ENCODE measurements at regions of chr4 and their contacts with region 1.

Region 1: GRCh38 chr4:1870578-1871443 is at the start of gene NSD2:
- DNase-seq: peak; percentile 88
- H3K4me3 Mint-ChIP-seq: peak within 1 kb of the TSS; percentile 89
- H3K27ac Mint-ChIP-seq: peak within 1 kb of the TSS; percentile 97
- H3K4me1 Mint-ChIP-seq: peaks cover 45% of the 10 kb centered on the region
- H3K27me3 Mint-ChIP-seq: peaks cover 2% of the 10 kb centered on the region
- total RNA-seq, gene NSD2: 248 to 271 TPM

Region 2: GRCh38 chr4:1604711-1605205 is 266.1 kb before region 1 on chr4:
- CTCF ChIA-PET with region 1: no interaction called
- POLR2A ChIA-PET with region 1: no interaction called
- DNase-seq: peak; percentile 54
- H3K4me3 Mint-ChIP-seq: peak overlapping the region; percentile 56
- H3K27ac Mint-ChIP-seq: peak overlapping the region; percentile 97
- H3K4me1 Mint-ChIP-seq: peaks cover 19% of the 10 kb centered on the region
- H3K27me3 Mint-ChIP-seq: no peaks in the 10 kb centered on the region

Region 3: DNA sequence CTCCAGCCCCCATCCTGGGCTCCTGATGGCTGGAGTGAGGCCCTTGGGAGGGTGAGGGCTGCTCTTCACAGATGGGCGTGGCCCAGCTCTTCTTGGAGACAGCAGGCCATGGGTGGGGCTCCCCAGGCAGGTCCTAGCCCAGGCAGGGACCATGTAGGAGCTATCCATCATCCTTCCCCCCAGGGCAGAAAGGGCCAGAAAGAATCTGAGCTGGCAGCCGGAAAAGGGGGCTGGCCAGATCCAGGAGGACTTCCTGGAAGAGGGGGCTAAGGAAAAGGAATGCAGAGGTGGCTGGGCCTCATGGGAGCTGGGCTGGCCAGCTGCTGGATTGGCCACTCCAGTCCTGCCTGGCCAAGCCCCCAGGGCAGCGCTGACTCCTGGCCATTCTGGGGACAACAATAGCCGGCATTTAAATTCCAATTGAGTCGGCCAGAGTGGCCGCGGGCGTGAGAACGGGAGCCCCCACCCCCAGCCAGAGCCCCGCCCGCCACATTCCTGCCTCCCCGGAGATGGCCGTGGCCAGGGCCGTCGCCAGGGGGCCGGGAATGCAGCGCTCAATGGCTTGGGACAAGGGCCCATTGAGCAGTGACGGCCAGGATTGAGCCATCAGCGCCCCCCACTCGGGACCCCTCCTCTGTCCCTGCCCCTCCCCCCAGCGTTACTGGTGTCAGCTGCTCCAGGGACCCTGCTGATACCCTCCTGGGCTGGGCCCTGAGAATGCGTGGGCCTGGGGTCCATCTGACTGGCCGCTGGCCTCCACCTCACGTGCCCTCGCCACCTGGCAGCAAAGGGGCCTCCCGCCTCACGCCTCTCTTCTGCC is 92.8 kb before region 1 on chr4:
- CTCF ChIA-PET with region 1: no interaction called
- POLR2A ChIA-PET with region 1: no interaction called
- DNase-seq: no peak
- H3K4me3 Mint-ChIP-seq: no peak overlapping the region
- H3K27ac Mint-ChIP-seq: no peak overlapping the region
- H3K4me1 Mint-ChIP-seq: no peaks in the 10 kb centered on the region
- H3K27me3 Mint-ChIP-seq: no peaks in the 10 kb centered on the region

Region 4: GRCh38 chr4:1856042-1856788 is 14.6 kb before region 1 on chr4 and contains the start of gene LETM1:
- CTCF ChIA-PET with region 1: interaction called, 10 read pairs
- POLR2A ChIA-PET with region 1: no interaction called
- DNase-seq: peak; percentile 95
- H3K4me3 Mint-ChIP-seq: peak within 1 kb of the TSS; percentile 77
- H3K27ac Mint-ChIP-seq: peak within 1 kb of the TSS; percentile 82
- H3K4me1 Mint-ChIP-seq: peaks cover 46% of the 10 kb centered on the region
- H3K27me3 Mint-ChIP-seq: no peaks in the 10 kb centered on the region
- total RNA-seq, gene LETM1: 40.7 to 49.5 TPM

Region 5: DNA sequence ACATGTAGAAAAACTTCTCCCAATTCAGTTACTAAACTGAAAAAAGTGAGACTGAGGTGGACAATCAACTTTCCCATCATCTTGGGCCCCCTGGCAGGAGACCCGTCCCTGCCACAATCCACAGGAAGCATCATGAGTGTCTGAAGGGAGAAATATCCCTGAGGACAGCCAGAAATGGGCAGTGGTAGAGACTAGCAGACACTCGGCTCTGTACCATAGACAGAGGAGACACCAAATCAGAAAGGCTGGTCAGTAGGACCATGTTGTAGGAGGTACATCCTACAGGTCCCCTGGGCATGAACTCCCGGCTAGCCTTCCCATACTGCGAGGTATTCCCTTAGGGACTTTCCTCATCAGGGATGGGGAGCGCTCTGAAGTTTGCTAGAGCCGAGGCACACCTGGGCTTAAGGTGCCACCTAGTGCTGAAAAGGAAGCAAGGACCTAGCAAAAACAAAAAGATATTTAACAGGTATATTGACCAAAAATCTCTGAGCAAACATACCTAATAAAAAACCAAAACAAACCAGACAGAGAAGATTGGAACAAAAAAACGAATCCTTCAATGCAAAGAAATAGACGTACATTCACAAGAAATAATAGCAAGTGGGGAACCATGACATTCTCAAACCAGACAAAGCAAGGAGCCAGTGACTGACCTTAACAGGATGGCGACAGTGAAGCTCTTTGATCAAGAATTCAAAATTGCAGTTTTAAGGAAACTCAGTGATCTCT is 315.5 kb after region 1 on chr4:
- CTCF ChIA-PET with region 1: no interaction called
- POLR2A ChIA-PET with region 1: no interaction called
- DNase-seq: peak; percentile 16
- H3K4me3 Mint-ChIP-seq: no peak overlapping the region
- H3K27ac Mint-ChIP-seq: no peak overlapping the region
- H3K4me1 Mint-ChIP-seq: no peaks in the 10 kb centered on the region
- H3K27me3 Mint-ChIP-seq: no peaks in the 10 kb centered on the region